Caco-2 (cell line): ENCODE measurements at regions of chr2 and their contacts with region 1.

Region 1: GRCh38 chr2:113756355-113757137 is at the start of gene SLC35F5:
- DNase-seq: peak; percentile 91 to 98
- H3K4me3 ChIP-seq: peak within 1 kb of the TSS; percentile 81
- H3K4me3 Mint-ChIP-seq: peak within 1 kb of the TSS; percentile 77
- H3K27ac Mint-ChIP-seq: peak within 1 kb of the TSS; percentile 93
- H3K4me1 ChIP-seq: peaks cover 9% of the 10 kb centered on the region
- H3K4me1 Mint-ChIP-seq: no peaks in the 10 kb centered on the region
- H3K27me3 ChIP-seq: no peaks in the 10 kb centered on the region
- H3K27me3 Mint-ChIP-seq: no peaks in the 10 kb centered on the region
- CTCF ChIP-seq: no peak
- total RNA-seq, gene SLC35F5: 140 and 149 TPM in 2 replicates

Region 2: GRCh38 chr2:113795405-113795920 is 38.9 kb after region 1 on chr2:
- CTCF ChIA-PET with region 1: interaction called, 3 read pairs
- POLR2A ChIA-PET with region 1: no interaction called
- intact Hi-C with region 1: loop called (anchors 2 kb)
- DNase-seq: no peak
- H3K4me3 ChIP-seq: no peak overlapping the region
- H3K4me3 Mint-ChIP-seq: no peak overlapping the region
- H3K27ac Mint-ChIP-seq: no peak overlapping the region
- H3K4me1 ChIP-seq: peaks cover 60% of the 10 kb centered on the region
- H3K4me1 Mint-ChIP-seq: peaks cover 43% of the 10 kb centered on the region
- H3K27me3 ChIP-seq: no peaks in the 10 kb centered on the region
- H3K27me3 Mint-ChIP-seq: no peaks in the 10 kb centered on the region
- CTCF ChIP-seq: no peak

Region 3: GRCh38 chr2:113806217-113806930 is 49.8 kb after region 1 on chr2:
- CTCF ChIA-PET with region 1: no interaction called
- POLR2A ChIA-PET with region 1: interaction called, 10 read pairs
- intact Hi-C with region 1: no loop called
- DNase-seq: peak; percentile 79 to 90
- H3K4me3 ChIP-seq: no peak overlapping the region
- H3K4me3 Mint-ChIP-seq: no peak overlapping the region
- H3K27ac Mint-ChIP-seq: peak overlapping the region; percentile 81
- H3K4me1 ChIP-seq: peaks cover 52% of the 10 kb centered on the region
- H3K4me1 Mint-ChIP-seq: peaks cover 37% of the 10 kb centered on the region
- H3K27me3 ChIP-seq: no peaks in the 10 kb centered on the region
- H3K27me3 Mint-ChIP-seq: no peaks in the 10 kb centered on the region
- CTCF ChIP-seq: no peak

Region 4: DNA sequence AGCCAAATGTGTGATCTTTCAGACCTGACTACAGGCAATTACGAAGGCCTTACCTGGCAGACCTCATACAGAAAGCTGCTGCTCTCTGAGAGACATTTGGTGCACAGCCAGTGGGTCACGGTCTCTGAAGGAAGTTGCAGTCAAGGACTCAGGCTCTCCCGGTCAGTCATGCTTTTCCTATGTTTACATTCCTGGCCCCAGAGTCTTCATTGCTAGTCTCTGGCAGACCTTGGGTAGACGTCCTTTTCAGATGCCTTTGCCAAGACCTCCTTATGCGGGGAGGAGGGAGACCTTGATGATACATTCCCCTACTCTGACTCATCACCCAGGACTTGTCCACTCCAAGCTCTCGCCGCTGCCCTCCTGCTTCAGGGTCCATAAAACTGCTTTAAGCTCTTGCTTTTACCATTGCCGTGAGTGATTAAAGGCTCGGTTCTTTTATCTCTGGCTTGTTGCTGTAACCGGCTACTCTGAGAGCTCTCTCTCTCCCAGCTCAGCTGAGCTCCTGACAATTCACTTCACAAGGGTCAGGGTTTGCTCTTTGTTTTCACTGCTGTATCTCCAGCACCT is 61.9 kb after region 1 on chr2:
- CTCF ChIA-PET with region 1: no interaction called
- POLR2A ChIA-PET with region 1: interaction called, 20 read pairs
- intact Hi-C with region 1: loop called (anchors 1 kb)
- DNase-seq: peak; percentile 88 to 96
- H3K4me3 ChIP-seq: peak overlapping the region; percentile 9; the same call in 1 of the 2 replicates
- H3K4me3 Mint-ChIP-seq: peak overlapping the region; percentile 52
- H3K27ac Mint-ChIP-seq: peak overlapping the region; percentile 85
- H3K4me1 ChIP-seq: peaks cover 26% of the 10 kb centered on the region
- H3K4me1 Mint-ChIP-seq: peaks cover 22% of the 10 kb centered on the region
- H3K27me3 ChIP-seq: no peaks in the 10 kb centered on the region
- H3K27me3 Mint-ChIP-seq: no peaks in the 10 kb centered on the region
- CTCF ChIP-seq: no peak

Region 5: DNA sequence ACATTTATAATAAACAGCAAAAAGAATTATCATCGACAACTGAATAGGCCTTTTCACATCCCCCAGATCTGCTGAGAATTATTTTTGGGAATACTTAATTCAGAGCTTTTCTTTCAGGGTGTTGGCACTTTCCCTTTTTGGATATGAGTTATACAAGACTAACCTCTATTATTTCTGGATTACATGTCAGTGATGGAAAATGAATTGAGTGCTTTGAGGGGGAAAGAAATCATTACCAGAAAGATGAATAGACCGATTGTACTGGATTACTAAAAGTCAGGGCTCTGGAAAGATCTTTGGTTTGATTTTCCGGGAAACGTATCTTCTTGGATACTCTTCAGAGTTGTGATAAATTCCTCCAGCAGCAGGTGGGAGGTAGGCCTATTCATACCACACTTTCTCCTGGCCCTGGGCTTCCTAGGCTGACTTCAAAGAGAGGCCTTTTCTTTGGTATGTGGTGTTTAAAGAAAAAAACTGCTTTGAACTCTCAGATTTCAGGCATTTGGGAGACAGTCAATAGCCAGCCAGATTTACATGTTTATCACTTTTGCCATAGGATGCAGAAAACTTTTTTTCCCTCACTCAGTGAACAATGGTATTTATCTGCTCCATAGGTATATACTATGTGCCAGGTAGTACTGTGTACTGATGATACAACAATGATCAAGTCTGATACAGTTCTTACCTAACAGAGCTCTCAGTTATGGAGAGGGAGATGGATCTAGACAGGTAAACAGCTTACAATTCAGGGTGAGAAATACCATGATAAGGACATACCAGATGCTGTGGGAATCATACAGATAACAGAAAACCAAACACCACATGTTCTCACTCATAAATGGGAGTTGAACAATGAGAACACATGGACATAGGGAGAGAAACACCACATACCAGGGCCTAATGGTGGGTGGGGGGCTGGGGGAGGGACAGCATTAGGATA is 70.1 kb after region 1 on chr2:
- CTCF ChIA-PET with region 1: no interaction called
- POLR2A ChIA-PET with region 1: interaction called, 9 read pairs
- intact Hi-C with region 1: loop called (anchors 2 kb)
- DNase-seq: peak; percentile 80 to 85
- H3K4me3 ChIP-seq: no peak overlapping the region
- H3K4me3 Mint-ChIP-seq: peak overlapping the region; percentile 39
- H3K27ac Mint-ChIP-seq: peak overlapping the region; percentile 92
- H3K4me1 ChIP-seq: peaks cover 54% of the 10 kb centered on the region
- H3K4me1 Mint-ChIP-seq: peaks cover 51% of the 10 kb centered on the region
- H3K27me3 ChIP-seq: no peaks in the 10 kb centered on the region
- H3K27me3 Mint-ChIP-seq: no peaks in the 10 kb centered on the region
- CTCF ChIP-seq: no peak

Region 6: DNA sequence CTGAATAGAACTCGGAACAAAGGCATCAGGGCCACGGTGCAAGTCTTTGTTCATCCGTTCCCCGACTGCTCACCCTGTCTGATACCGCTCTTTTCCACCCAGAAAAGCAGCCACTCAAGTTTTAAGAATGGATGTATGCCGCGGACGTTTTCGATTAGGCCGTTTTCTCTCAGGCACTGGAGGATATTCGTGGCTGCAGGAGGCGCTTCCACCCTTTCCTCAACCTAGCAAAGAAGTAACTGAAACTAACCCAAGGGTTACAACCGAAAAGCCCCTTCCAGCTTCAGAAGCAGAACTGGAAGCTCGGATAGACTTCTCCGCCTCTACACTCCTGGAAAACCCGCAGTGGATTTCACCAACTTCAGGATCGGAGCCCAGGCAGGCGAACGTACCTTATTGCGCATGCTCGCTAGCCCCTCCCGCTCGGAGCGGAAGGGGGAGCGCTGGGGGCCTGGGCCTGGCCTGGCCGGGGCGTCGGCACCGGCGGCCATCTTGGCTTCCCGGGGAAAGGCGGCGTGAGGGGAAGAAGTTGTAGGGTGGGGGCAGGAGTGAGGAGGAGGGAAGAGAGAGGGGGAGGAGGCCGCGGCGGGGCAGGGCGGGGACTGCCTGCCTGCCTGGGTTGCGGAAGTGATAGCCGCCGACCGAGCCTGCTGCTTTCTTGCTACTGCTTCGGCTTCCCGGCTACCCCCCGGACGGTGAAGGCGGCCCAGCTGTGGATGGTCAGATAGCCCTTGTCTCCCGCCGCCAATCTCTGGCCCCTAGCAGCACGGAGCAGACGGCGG is 133.1 kb after region 1 on chr2 and contains the start of gene ACTR3:
- CTCF ChIA-PET with region 1: no interaction called
- POLR2A ChIA-PET with region 1: interaction called, 13 read pairs
- intact Hi-C with region 1: loop called (anchors 1 kb)
- DNase-seq: peak; percentile 98 to 99
- H3K4me3 ChIP-seq: peak within 1 kb of the TSS; percentile 98
- H3K4me3 Mint-ChIP-seq: peak within 1 kb of the TSS; percentile 80
- H3K27ac Mint-ChIP-seq: peak within 1 kb of the TSS; percentile 53
- H3K4me1 ChIP-seq: peaks cover 49% of the 10 kb centered on the region
- H3K4me1 Mint-ChIP-seq: peaks cover 54% of the 10 kb centered on the region
- H3K27me3 ChIP-seq: no peaks in the 10 kb centered on the region
- H3K27me3 Mint-ChIP-seq: no peaks in the 10 kb centered on the region
- CTCF ChIP-seq: no peak
- total RNA-seq, gene ACTR3: 340 and 341 TPM in 2 replicates

Region 7: GRCh38 chr2:114219456-114220014 is 463.0 kb after region 1 on chr2:
- CTCF ChIA-PET with region 1: no interaction called
- POLR2A ChIA-PET with region 1: no interaction called
- intact Hi-C with region 1: no loop called
- DNase-seq: no peak
- H3K4me3 ChIP-seq: no peak overlapping the region
- H3K4me3 Mint-ChIP-seq: no peak overlapping the region
- H3K27ac Mint-ChIP-seq: no peak overlapping the region
- H3K4me1 ChIP-seq: no peaks in the 10 kb centered on the region
- H3K4me1 Mint-ChIP-seq: no peaks in the 10 kb centered on the region
- H3K27me3 ChIP-seq: no peaks in the 10 kb centered on the region
- H3K27me3 Mint-ChIP-seq: peaks cover 7% of the 10 kb centered on the region
- CTCF ChIP-seq: no peak

Region 8: GRCh38 chr2:114550895-114551793 is 794.6 kb after region 1 on chr2:
- CTCF ChIA-PET with region 1: no interaction called
- POLR2A ChIA-PET with region 1: no interaction called
- intact Hi-C with region 1: loop called (anchors 5 kb)
- DNase-seq: peak; percentile 72 to 77
- H3K4me3 ChIP-seq: no peak overlapping the region
- H3K4me3 Mint-ChIP-seq: no peak overlapping the region
- H3K27ac Mint-ChIP-seq: no peak overlapping the region
- H3K4me1 ChIP-seq: peaks cover 21% of the 10 kb centered on the region
- H3K4me1 Mint-ChIP-seq: peaks cover 18% of the 10 kb centered on the region
- H3K27me3 ChIP-seq: no peaks in the 10 kb centered on the region
- H3K27me3 Mint-ChIP-seq: peaks cover under 1% of the 10 kb centered on the region
- CTCF ChIP-seq: peak; percentile 71 to 93